ENCODE measurements at regions of chr7 and their contacts with region 1.

Region 1: GRCh38 chr7:73718905-73719805 is at the start of gene STX1A:
- DNase-seq: peak; percentile 81
- H3K4me3 Mint-ChIP-seq: peak within 1 kb of the TSS; percentile 70
- H3K27ac Mint-ChIP-seq: peak within 1 kb of the TSS; percentile 62
- H3K4me1 Mint-ChIP-seq: peaks cover 34% of the 10 kb centered on the region
- H3K27me3 Mint-ChIP-seq: no peaks in the 10 kb centered on the region
- total RNA-seq, gene STX1A: 31.8 to 39.2 TPM

Region 2: DNA sequence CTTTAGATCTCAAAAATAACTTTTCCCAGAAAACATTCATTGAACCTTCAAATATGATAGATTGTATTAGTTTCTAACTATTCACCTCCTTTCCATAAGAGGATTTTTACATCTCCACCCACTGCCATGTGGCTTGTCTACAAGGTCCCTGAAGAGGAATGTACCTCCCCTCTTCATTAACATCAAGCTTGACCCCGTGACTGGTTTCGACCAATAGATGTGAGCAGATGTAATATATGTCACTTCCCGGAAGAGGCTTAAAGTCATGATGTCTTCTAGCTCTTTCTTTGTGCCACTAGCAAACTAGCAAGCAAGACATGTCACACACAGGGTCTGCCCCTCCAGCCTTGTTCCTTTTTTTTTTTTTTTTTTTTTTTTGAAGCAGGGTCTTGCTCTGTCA is 204.0 kb before region 1 on chr7:
- CTCF ChIA-PET with region 1: no interaction called
- POLR2A ChIA-PET with region 1: no interaction called
- intact Hi-C with region 1: no loop called
- DNase-seq: no peak
- H3K4me3 Mint-ChIP-seq: no peak overlapping the region
- H3K27ac Mint-ChIP-seq: no peak overlapping the region
- H3K4me1 Mint-ChIP-seq: peaks cover 47% of the 10 kb centered on the region
- H3K27me3 Mint-ChIP-seq: no peaks in the 10 kb centered on the region

Region 3: GRCh38 chr7:73667344-73668102 is 51.6 kb before region 1 on chr7 and contains the start of gene VPS37D:
- CTCF ChIA-PET with region 1: interaction called, 5 read pairs
- POLR2A ChIA-PET with region 1: interaction called, 3 read pairs
- intact Hi-C with region 1: loop called (anchors 2 kb)
- DNase-seq: peak; percentile 92
- H3K4me3 Mint-ChIP-seq: peak within 1 kb of the TSS; percentile 62
- H3K27ac Mint-ChIP-seq: no peak within 1 kb of the TSS
- H3K4me1 Mint-ChIP-seq: peaks cover 3% of the 10 kb centered on the region
- H3K27me3 Mint-ChIP-seq: peaks cover 36% of the 10 kb centered on the region
- total RNA-seq, gene VPS37D: 0.22 to 0.26 TPM

Region 4: GRCh38 chr7:73701357-73701995 is 17.7 kb before region 1 on chr7:
- CTCF ChIA-PET with region 1: interaction called, 5 read pairs
- POLR2A ChIA-PET with region 1: interaction called, 18 read pairs
- intact Hi-C with region 1: loop called (anchors 1 kb)
- DNase-seq: peak; percentile 44
- H3K4me3 Mint-ChIP-seq: no peak overlapping the region
- H3K27ac Mint-ChIP-seq: no peak overlapping the region
- H3K4me1 Mint-ChIP-seq: peaks cover 3% of the 10 kb centered on the region
- H3K27me3 Mint-ChIP-seq: no peaks in the 10 kb centered on the region

Region 5: GRCh38 chr7:73738612-73739374 is 19.6 kb after region 1 on chr7 and contains the start of gene ABHD11:
- CTCF ChIA-PET with region 1: interaction called, 12 read pairs
- POLR2A ChIA-PET with region 1: interaction called, 7 read pairs
- intact Hi-C with region 1: loop called (anchors 1 kb)
- DNase-seq: peak; percentile 99
- H3K4me3 Mint-ChIP-seq: peak within 1 kb of the TSS; percentile 91
- H3K27ac Mint-ChIP-seq: peak within 1 kb of the TSS; percentile 82
- H3K4me1 Mint-ChIP-seq: peaks cover 13% of the 10 kb centered on the region
- H3K27me3 Mint-ChIP-seq: no peaks in the 10 kb centered on the region
- total RNA-seq, gene ABHD11: 14.7 to 16.8 TPM

Measured in activated CD4-positive, alpha-beta memory T cell treated with anti-CD3 and anti-CD28 coated beads for 36 hours (primary cell).